WTC11 (cell line): ENCODE measurements at regions of chr19 and their contacts with region 1.

Region 1: GRCh38 chr19:17470068-17470841 is at the start of gene SLC27A1:
- DNase-seq: peak; percentile 99
- ATAC-seq: peak; percentile 91
- H3K4me3 Mint-ChIP-seq: peak within 1 kb of the TSS; percentile 93
- H3K27ac Mint-ChIP-seq: peak within 1 kb of the TSS; percentile 98
- H3K4me1 Mint-ChIP-seq: peaks cover 19% of the 10 kb centered on the region
- H3K27me3 Mint-ChIP-seq: peaks cover 49% of the 10 kb centered on the region
- CTCF ChIP-seq: no peak
- total RNA-seq, gene SLC27A1: 8.6 to 12.1 TPM (median 10.1 TPM) in 3 replicates

Region 2: DNA sequence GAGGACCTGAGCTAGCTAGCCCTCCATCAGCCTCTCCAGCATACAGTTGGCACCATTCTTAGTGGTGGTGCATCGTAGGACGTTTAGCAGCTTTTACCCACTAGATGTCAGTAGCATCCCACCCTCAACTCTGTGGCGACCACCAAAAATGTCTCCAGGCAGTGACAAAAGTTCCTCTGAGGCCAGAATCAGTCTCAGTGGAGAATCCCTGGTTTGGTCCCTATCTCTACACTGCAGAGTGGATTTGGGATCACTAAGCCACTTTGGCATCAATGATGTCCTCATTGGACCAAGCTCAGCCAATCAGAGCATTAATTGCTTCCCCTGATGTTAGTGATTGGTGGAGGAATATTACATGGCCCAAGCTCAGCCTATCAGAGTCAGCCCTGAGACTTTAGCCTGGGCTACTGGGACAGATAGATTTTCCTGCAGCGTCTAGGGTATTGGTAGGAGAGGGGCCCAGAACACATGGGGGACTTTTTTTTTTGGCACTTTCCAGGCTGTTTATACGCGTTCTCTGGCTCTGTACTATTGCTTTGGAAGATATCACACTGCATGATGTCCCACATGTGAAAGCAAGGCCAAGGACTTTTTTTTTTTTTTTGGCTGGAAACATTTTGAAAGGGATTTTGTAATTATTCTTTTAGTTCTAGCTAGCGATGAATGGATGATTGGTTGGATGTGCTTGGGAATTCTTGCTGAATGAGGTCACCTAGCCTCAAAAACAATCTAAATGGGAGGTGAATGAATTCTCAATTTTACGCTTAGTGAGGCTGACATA is 28.8 kb before region 1 on chr19:
- CTCF ChIA-PET with region 1: interaction called, 18 read pairs
- POLR2A ChIA-PET with region 1: no interaction called
- DNase-seq: peak; percentile 41
- ATAC-seq: peak; percentile 88
- H3K4me3 Mint-ChIP-seq: no peak overlapping the region
- H3K27ac Mint-ChIP-seq: no peak overlapping the region
- H3K4me1 Mint-ChIP-seq: no peaks in the 10 kb centered on the region
- H3K27me3 Mint-ChIP-seq: peaks cover 8% of the 10 kb centered on the region
- CTCF ChIP-seq: no peak; the same call in 1 of the 2 replicates

Region 3: GRCh38 chr19:17448131-17448967 is 21.9 kb before region 1 on chr19 and contains the start of gene TMEM221:
- CTCF ChIA-PET with region 1: interaction called, 14 read pairs
- POLR2A ChIA-PET with region 1: no interaction called
- DNase-seq: peak; percentile 78
- ATAC-seq: peak; percentile 75
- H3K4me3 Mint-ChIP-seq: peak within 1 kb of the TSS; percentile 70
- H3K27ac Mint-ChIP-seq: no peak within 1 kb of the TSS
- H3K4me1 Mint-ChIP-seq: peaks cover 3% of the 10 kb centered on the region
- H3K27me3 Mint-ChIP-seq: peaks cover 22% of the 10 kb centered on the region
- CTCF ChIP-seq: peak; percentile 40; the same call in 1 of the 2 replicates
- total RNA-seq, gene TMEM221: 1.2 to 2.9 TPM (median 2.3 TPM) in 3 replicates

Region 4: GRCh38 chr19:17455308-17456123 is 14.7 kb before region 1 on chr19:
- CTCF ChIA-PET with region 1: interaction called, 16 read pairs
- POLR2A ChIA-PET with region 1: no interaction called
- DNase-seq: peak; percentile 46
- ATAC-seq: peak; percentile 38
- H3K4me3 Mint-ChIP-seq: peak overlapping the region; percentile 59
- H3K27ac Mint-ChIP-seq: no peak overlapping the region
- H3K4me1 Mint-ChIP-seq: peaks cover 14% of the 10 kb centered on the region
- H3K27me3 Mint-ChIP-seq: peaks cover 62% of the 10 kb centered on the region
- CTCF ChIP-seq: no peak

Region 5: GRCh38 chr19:17522988-17523872 is 53.0 kb after region 1 on chr19:
- CTCF ChIA-PET with region 1: no interaction called
- POLR2A ChIA-PET with region 1: no interaction called
- DNase-seq: no peak
- ATAC-seq: no peak
- H3K4me3 Mint-ChIP-seq: no peak overlapping the region
- H3K27ac Mint-ChIP-seq: peak overlapping the region; percentile 45; the same call in 1 of the 2 replicates
- H3K4me1 Mint-ChIP-seq: peaks cover 4% of the 10 kb centered on the region; the same call in 1 of the 2 replicates
- H3K27me3 Mint-ChIP-seq: peaks cover 10% of the 10 kb centered on the region; the same call in 1 of the 2 replicates
- CTCF ChIP-seq: no peak